ENCODE measurements at regions of chr22 and their contacts with region 1.

Region 1: DNA sequence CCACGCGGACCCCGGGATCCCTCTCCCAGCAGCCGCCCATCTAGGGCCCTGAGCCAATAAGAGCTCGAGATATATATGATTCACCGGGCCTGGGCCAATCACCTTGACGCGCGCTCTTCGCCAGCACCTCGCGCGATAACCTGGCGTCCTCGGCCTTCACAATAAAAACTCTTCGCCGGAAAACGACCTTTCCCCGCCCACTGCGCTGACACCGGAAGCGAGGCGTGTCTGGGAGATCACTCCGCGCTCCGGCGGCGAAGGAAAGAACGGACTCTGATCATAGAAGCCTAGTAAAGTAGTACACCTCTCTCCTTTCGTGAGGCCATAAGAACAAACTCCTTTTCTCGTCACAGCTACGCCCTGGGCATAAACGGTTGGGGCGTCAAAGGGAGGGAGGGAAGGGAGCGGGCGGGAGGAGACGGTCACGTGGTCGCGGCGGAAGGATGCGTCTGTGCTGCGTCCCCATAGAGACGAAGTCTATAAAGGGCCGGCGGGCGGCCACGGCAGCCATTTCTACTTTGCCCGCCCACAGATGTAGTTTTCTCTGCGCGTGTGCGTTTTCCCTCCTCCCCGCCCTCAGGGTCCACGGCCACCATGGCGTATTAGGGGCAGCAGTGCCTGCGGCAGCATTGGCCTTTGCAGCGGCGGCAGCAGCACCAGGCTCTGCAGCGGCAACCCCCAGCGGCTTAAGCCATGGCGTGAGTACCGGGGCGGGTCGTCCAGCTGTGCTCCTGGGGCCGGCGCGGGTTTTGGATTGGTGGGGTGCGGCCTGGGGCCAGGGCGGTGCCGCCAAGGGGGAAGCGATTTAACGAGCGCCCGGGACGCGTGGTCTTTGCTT is at the start of gene ATF4:
- DNase-seq: peak; percentile 98
- H3K4me3 Mint-ChIP-seq: peak within 1 kb of the TSS; percentile 86
- H3K27ac Mint-ChIP-seq: peak within 1 kb of the TSS; percentile 97
- H3K4me1 Mint-ChIP-seq: peaks cover 64% of the 10 kb centered on the region
- H3K27me3 Mint-ChIP-seq: peaks cover 1% of the 10 kb centered on the region
- total RNA-seq, gene ATF4: 372 to 437 TPM

Region 2: GRCh38 chr22:39462443-39463221 is 57.6 kb before region 1 on chr22:
- CTCF ChIA-PET with region 1: no interaction called
- POLR2A ChIA-PET with region 1: no interaction called
- DNase-seq: no peak
- H3K4me3 Mint-ChIP-seq: no peak overlapping the region
- H3K27ac Mint-ChIP-seq: no peak overlapping the region
- H3K4me1 Mint-ChIP-seq: peaks cover 24% of the 10 kb centered on the region
- H3K27me3 Mint-ChIP-seq: peaks cover 16% of the 10 kb centered on the region

Region 3: DNA sequence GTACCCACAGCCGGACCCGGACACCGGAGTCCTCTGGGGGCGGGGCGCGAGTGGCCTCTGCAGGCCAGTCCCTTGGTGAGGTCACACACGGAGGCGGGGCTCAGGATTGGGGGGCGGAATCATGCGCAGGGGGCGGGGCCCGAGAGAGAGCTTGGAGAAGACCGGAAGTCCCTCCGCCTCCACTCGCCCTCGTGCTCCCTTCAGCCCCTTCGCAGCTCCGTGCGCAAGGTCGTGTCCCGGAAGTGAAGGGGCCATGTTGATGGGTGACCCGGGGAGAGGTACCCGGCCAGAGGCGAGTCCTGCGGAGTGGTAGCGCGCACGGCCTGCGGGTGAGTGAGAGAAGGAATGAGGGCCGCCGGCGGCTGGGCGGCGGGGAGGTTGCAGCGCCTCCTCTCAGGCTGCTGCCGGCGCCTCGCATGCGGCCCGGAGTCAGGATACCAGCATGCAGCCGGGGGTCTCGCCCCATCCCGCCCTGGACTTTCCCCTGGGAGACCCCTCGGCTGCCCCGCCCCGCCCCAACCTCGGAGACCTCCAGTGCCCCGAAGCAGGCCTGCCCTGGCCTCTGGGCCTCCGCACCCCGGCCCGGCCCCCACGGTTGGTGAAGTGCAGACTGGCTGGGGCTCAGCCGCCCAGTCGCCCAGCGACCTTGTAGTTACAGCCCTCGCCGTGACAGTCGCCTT is 18.0 kb before region 1 on chr22 and contains the start of gene MIEF1:
- CTCF ChIA-PET with region 1: interaction called, 216 read pairs
- POLR2A ChIA-PET with region 1: interaction called, 16 read pairs
- DNase-seq: peak; percentile 92
- H3K4me3 Mint-ChIP-seq: peak within 1 kb of the TSS; percentile 96
- H3K27ac Mint-ChIP-seq: peak within 1 kb of the TSS; percentile 95
- H3K4me1 Mint-ChIP-seq: peaks cover 41% of the 10 kb centered on the region
- H3K27me3 Mint-ChIP-seq: peaks cover 5% of the 10 kb centered on the region
- total RNA-seq, gene MIEF1: 34.8 to 40.0 TPM